CD8-positive, alpha-beta T cell (primary cell): ENCODE measurements at regions of chr7 and their contacts with region 1.

Region 1: DNA sequence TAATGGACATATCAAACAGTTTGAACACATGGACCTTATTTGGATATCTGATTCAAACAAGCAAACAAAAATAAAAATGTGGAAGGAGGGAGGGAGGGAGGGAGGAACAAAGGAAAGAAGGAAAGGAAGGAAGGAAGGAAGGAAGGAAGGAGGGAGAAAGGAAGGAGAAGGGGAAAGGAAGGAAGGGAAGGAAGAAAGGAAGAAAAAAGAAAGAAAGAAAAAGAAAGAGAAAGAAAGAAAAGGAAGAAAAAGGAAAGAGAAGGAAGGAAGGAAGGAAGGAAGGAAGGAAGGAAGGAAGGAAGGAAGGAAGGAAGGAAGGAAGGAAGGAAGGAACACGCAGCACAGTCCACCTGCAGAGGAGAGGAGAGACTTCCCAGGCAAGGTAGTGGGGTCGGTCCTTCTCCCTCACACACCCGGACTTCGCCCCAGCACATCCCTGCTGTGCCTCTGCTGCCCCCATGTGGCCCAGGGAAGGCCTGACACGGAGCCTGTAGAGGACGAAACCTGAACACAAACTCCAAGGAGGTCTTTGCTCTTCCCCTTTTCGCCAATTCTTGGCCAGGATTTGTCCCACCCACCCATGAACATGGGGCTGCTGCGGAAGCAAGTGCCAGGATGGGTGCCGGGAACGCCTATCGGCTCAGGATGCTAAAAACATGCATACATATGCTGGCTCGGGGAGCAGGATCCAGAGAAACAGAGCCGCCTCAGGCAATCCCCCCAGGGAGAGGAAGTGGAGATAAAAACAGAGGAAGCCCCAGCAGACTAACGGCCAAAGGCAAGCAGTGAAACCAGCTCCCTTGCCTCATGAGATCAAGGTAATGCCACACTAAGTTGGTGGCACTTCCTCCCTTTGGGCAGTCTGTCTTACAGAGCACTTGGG is 52.3 kb upstream of the DGKI start:
- DNase-seq: peak; percentile 44 to 85 (median 77)
- ATAC-seq: peak; percentile 96
- H3K4me3 ChIP-seq: peak overlapping the region in 1 of 2 experiments; percentile 28
- H3K4me3 Mint-ChIP-seq: peak overlapping the region; percentile 44
- H3K27ac ChIP-seq: no peak overlapping the region
- H3K27ac Mint-ChIP-seq: peak overlapping the region; percentile 27
- H3K4me1 ChIP-seq: peaks cover 9% of the 10 kb centered on the region
- H3K4me1 Mint-ChIP-seq: peaks cover 18% of the 10 kb centered on the region
- H3K27me3 ChIP-seq: no peaks in the 10 kb centered on the region
- H3K27me3 Mint-ChIP-seq: no peaks in the 10 kb centered on the region
- CTCF ChIP-seq: peak; percentile 94

Region 2: DNA sequence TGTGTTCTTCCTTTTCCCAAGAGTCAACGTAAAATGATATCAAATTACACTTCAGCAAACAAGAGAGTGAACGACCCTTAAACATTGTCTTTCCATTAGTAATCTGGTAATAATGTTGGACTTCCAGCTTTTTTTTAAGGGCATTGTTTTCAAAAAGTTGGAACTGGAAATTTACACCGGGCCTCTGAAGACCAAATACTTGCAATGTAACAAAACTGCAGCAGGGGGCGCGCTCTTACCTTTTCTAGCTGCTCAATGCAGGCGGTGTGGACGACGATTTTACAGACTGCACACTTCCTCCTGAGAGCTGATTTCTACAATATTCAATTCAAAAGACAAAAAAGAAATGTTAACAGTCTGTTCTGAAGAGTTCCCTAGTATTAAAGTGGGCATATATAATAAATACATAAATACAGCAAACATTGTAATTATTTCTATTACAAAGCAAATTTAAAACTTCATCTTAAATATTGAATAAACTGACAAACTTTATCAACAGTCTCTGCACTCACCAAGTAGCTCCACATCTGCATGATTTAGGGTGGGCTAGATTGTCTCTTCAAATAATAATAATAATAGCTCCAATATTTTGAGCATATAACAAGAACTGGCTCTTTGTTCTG is 242.7 kb before region 1 on chr7:
- CTCF ChIA-PET with region 1: interaction called, 7 read pairs
- POLR2A ChIA-PET with region 1: no interaction called
- intact Hi-C with region 1: loop called in 1 of 2 experiments (anchors 1 kb)
- DNase-seq: peak in 8 of 9 experiments; percentile 29 to 56 (median 48)
- ATAC-seq: no peak
- H3K4me3 ChIP-seq: no peak overlapping the region
- H3K4me3 Mint-ChIP-seq: no peak overlapping the region
- H3K27ac ChIP-seq: no peak overlapping the region
- H3K27ac Mint-ChIP-seq: no peak overlapping the region
- H3K4me1 ChIP-seq: no peaks in the 10 kb centered on the region
- H3K4me1 Mint-ChIP-seq: no peaks in the 10 kb centered on the region
- H3K27me3 ChIP-seq: no peaks in the 10 kb centered on the region
- H3K27me3 Mint-ChIP-seq: peaks cover 8% of the 10 kb centered on the region
- CTCF ChIP-seq: peak; percentile 83

Region 3: DNA sequence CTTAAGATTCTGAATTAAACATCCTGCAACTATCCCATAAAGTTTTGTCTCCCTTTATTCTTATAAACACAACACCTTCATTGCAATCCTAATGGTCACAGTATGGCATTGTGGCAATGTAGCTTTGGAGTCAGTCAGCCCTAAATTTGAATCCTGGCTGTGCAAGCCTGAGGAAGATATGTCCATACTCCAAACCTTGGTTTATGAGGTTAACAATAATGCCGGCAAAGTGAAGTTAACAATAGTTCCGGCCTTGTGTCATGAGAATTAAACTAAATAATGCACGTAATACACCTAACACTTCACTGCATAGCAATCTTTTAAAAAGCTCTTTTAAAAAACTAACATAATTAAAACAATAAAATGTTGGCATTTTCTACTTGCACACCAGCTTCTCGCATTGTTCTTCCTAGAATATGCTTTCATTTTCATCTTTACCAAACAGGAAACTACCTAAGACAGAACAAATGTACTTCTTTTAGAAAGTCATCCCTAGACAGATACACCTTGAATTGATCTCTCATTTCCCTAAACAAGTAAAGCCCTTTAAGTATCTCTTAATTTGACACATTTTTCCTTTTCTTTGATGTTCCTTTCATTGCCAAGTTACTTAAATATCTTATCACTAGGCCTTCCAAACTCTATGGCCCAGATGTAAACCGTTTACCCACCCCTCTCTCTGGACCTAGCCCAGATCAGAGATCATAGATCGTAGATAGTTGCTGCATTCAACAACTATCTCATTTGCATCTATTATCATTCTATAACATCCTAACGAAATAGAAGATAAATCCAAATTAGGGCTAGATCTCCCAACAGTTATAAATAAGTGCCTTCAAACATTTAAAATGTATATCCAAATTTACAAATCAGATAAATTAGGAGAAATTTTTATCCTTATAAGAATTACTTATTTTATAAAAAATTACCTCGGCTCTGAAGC is 36.1 kb after region 1 on chr7:
- CTCF ChIA-PET with region 1: interaction called, 12 read pairs
- POLR2A ChIA-PET with region 1: no interaction called
- intact Hi-C with region 1: no loop called
- DNase-seq: peak in 2 of 9 experiments; percentile 30 to 56
- ATAC-seq: peak; percentile 83
- H3K4me3 ChIP-seq: peak overlapping the region; percentile 39 to 49
- H3K4me3 Mint-ChIP-seq: peak overlapping the region; percentile 84
- H3K27ac ChIP-seq: peak overlapping the region; percentile 34 to 79
- H3K27ac Mint-ChIP-seq: peak overlapping the region; percentile 95
- H3K4me1 ChIP-seq: peaks cover 23% of the 10 kb centered on the region
- H3K4me1 Mint-ChIP-seq: peaks cover 43% of the 10 kb centered on the region
- H3K27me3 ChIP-seq: no peaks in the 10 kb centered on the region
- H3K27me3 Mint-ChIP-seq: no peaks in the 10 kb centered on the region
- CTCF ChIP-seq: no peak

Region 4: GRCh38 chr7:138008547-138009349 is 109.7 kb after region 1 on chr7:
- CTCF ChIA-PET with region 1: interaction called, 342 read pairs
- POLR2A ChIA-PET with region 1: no interaction called
- intact Hi-C with region 1: loop called (anchors 1 kb)
- DNase-seq: peak in 7 of 9 experiments; percentile 9 to 71 (median 22)
- ATAC-seq: peak; percentile 77
- H3K4me3 ChIP-seq: no peak overlapping the region
- H3K4me3 Mint-ChIP-seq: no peak overlapping the region
- H3K27ac ChIP-seq: no peak overlapping the region
- H3K27ac Mint-ChIP-seq: no peak overlapping the region
- H3K4me1 ChIP-seq: no peaks in the 10 kb centered on the region
- H3K4me1 Mint-ChIP-seq: no peaks in the 10 kb centered on the region
- H3K27me3 ChIP-seq: no peaks in the 10 kb centered on the region
- H3K27me3 Mint-ChIP-seq: peaks cover 3% of the 10 kb centered on the region
- CTCF ChIP-seq: peak; percentile 96

Region 5: DNA sequence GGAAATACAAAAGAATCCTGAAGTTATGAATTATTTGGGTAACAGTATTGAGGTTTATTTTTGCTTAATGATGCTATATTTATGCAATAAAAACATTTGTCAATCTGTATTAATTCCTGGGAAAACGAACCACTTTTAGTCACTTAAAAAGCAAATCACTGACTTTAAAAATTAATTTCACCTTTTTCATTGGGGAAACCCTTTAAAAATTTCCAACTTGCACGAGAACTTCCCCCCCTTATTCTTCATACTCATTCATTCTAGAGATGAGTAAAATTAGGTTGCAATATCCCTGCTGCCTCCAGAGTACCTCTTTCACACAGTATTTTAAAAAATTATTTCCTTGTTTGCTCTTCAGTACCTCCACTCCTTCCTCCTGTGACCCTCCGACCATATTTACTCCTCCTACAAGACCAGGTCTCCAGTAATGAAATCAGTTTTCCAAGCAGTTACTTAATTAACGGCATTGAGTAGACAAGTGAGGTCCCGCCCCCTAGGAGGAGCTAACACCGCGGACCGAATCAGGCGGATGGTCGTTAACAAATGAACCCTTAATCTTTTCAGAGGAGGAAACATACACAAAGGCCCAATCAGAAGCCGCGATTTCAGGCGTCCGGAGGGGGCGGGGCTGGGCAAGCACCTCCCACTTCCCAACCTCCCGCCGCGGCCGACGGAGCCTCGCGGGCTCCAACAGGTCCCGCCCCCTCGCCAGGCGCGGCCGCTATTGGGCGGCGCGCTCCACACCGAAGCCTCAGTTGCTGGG is 560.5 kb after region 1 on chr7:
- CTCF ChIA-PET with region 1: no interaction called
- POLR2A ChIA-PET with region 1: no interaction called
- intact Hi-C with region 1: loop called in 1 of 2 experiments (anchors 10 kb)
- DNase-seq: peak; percentile 95 to 99 (median 97)
- ATAC-seq: peak; percentile 85
- H3K4me3 ChIP-seq: peak overlapping the region; percentile 18 to 42
- H3K4me3 Mint-ChIP-seq: peak overlapping the region; percentile 96
- H3K27ac ChIP-seq: peak overlapping the region in 1 of 2 experiments; percentile 2
- H3K27ac Mint-ChIP-seq: peak overlapping the region; percentile 86
- H3K4me1 ChIP-seq: peaks cover 14% of the 10 kb centered on the region
- H3K4me1 Mint-ChIP-seq: peaks cover 28% of the 10 kb centered on the region
- H3K27me3 ChIP-seq: no peaks in the 10 kb centered on the region
- H3K27me3 Mint-ChIP-seq: no peaks in the 10 kb centered on the region
- CTCF ChIP-seq: no peak